ENCODE measurements at regions of chr1 and their contacts with region 1.

Region 1: DNA sequence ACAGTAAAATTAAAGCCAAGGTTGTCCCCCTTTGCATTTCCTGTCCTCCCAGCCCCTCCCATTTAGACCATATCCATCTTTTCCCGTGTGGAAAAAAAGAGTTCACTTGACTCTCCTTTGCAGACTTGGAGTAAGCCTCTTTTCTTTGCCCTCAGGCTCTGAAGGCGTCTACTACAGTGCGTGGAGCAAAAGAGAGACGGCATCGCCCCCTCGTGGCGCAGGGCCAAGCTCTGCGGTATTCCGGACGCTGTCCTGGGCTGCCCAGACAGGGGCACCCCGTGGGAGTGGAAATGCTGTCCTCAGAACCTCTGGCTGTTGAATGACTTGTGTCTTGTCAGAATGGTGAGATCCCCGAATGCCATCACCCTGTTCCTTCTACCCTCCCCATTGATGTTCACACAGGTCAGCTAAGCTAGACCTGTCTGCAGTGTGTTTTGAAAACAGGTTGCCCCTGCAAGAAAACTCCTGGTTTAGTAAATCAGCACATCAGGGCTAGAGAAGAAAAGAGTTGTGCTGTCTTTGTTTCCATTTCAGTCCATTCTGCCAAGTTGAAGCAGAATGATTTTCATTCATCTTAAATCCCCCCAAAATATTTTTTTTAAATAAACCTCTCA is 12.3 kb upstream of the GJA8 start:
- ATAC-seq: peak; percentile 84 to 100 (median 99)
- H3K4me3 ChIP-seq: no peak overlapping the region
- H3K27ac ChIP-seq: no peak overlapping the region
- H3K4me1 ChIP-seq: peaks cover 10 to 16% of the 10 kb centered on the region in 2 donors

Region 2: GRCh38 chr1:147292631-147293251 is 597.5 kb before region 1 on chr1:
- in situ Hi-C with region 1: loop called in 1 of 9 experiments (anchors 25 kb)
- ATAC-seq: peak in 3 of 8 experiments; percentile 58 to 92 (median 90)
- H3K4me3 ChIP-seq: no peak overlapping the region
- H3K27ac ChIP-seq: no peak overlapping the region
- H3K4me1 ChIP-seq: no peaks in the 10 kb centered on the region

Region 3: DNA sequence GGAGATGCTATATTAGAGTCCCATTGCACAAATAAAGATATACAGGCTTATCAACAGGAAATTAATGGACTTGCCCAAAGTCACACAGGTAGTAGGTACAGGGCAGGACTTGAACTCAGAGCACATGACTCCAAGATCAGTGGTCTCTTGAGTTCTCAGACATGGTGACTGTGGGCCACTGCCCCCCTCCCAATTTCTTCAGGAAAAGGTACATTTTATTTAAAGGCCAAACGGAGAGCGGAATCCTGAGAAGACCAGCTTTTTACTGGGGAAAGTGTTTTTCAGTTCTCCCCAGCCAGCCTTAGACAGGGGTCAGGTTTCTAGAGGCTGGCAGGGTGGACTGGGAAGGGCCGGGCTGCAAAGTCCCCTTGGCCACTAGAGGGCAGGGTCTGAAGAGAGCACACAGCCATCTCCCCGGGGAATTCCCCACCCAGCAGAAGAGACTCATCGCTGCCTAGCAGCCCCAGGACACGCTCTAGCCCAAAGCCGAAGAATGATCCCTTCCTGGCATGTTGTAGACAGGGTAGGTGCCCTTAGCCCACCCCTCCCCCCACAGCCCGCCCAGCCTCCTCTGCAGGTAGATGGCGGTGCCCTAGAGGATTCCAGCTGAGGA is 249.6 kb before region 1 on chr1:
- in situ Hi-C with region 1: loop called in 2 of 9 experiments (anchors 25 kb)
- ATAC-seq: peak; percentile 72 to 99 (median 87)
- H3K4me3 ChIP-seq: no peak overlapping the region
- H3K27ac ChIP-seq: no peak overlapping the region
- H3K4me1 ChIP-seq: no peaks in the 10 kb centered on the region

Region 4: DNA sequence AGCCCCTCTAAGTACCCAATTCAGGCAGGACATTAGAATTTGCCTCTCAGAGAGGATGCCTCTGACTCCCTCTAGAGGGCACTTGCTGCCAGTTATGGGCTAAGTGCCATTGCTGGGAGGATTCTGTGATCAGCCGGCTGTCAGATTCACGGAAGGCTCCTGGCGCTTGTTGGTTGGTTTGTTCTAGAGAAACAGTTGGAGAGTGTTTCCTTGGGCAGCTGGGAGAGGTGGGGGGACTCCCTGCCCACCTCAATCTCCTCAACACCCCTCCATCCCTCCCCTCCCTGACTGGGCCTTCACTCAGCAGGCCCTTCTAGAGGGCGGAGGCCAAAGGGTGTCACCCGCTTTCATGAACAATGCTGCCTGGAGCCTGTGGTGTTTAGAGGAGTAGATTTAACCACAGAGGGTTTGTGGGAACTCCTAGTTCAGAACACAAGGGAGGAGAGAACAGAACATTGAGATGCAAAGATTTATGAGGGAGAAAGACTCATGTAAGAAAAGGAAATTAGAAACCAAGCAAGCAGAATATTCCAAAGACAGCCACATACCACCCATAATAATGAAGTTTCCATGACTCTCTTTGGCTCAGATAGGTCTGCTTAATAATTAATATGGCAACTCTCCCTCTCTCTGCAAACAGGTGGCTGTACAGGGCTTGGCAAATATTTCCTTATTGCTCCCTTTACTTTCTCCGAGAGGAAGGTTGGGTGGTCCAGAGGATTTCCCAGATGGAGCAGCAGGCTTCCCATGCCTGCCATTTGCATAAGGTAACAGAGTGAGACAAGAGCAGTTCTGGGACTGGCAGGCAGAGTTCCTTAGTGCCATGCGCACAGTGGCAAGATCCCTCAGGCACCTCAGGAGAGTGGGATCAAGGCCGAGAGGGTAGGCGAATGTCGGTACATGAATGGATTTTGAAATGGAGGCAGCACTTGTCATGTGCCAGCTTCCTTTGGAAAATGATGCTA is 190.0 kb before region 1 on chr1:
- in situ Hi-C with region 1: loop called in 2 of 9 experiments (anchors 25 kb)
- ATAC-seq: peak; percentile 89 to 99 (median 93)
- H3K4me3 ChIP-seq: no peak overlapping the region
- H3K27ac ChIP-seq: peak overlapping the region in 1 of 2 donors; percentile 18
- H3K4me1 ChIP-seq: peaks cover 7 to 17% of the 10 kb centered on the region in 2 donors

Region 5: GRCh38 chr1:147748676-147749350 is 141.5 kb before region 1 on chr1:
- in situ Hi-C with region 1: loop called in 1 of 9 experiments (anchors 25 kb)
- ATAC-seq: peak in 1 of 8 experiments; percentile 21
- H3K4me3 ChIP-seq: no peak overlapping the region
- H3K27ac ChIP-seq: no peak overlapping the region
- H3K4me1 ChIP-seq: peaks cover 0 to 10% of the 10 kb centered on the region in 2 donors

Region 6: DNA sequence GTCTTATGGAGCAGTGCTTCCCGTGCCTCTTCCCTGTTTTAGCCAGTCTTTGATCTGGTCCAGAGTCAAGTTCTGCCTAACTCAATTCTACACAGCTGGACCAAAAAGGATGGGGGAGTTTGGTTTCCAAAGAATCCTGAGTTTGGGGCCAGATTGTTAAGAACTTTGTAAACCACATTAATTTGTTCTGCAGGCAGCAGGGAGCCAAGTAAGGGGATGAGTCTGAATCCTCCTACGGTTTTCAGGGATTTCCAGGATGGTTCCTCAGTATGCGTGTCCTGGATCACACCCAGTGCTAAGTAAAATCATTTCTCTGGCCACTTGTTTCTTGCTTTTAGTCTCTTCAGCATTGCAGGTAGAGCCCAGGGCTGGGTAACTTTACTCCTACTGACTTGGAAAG is 103.7 kb before region 1 on chr1:
- in situ Hi-C with region 1: no loop called
- ATAC-seq: peak in 1 of 8 experiments; percentile 21
- H3K4me3 ChIP-seq: no peak overlapping the region
- H3K27ac ChIP-seq: no peak overlapping the region
- H3K4me1 ChIP-seq: peaks cover 11 to 15% of the 10 kb centered on the region in 2 donors

Region 7: DNA sequence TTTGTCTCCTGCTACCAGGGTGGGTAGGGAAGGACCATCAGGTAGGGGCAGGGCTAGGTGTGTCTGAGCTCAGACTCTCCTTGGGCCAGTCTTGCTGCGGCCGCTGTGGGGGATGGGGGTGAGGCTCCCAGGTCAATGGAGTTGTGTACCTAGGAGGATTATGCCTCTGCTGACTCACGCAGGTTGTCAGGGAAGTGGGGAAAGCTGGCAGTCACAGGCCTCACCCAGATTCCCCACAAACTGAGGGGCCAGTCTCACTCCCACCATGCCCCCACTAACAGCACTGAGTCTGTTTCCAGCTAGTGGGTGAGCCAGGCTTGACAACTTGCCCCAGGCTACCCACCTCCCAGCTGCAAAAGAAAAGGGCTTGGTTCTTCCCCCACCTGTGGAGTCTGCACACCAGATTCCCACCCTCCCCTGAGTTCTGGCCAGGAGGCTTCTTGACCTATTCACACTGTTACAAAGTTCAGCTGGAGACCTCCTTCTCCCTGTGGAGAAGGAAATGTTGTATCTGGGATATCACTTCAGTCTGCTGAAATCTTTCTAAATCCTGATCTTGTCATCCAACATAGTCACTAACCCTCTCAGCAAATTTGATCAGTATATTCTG is 56.9 kb before region 1 on chr1:
- in situ Hi-C with region 1: no loop called
- ATAC-seq: no peak
- H3K4me3 ChIP-seq: no peak overlapping the region
- H3K27ac ChIP-seq: no peak overlapping the region
- H3K4me1 ChIP-seq: peaks cover 0 to 8% of the 10 kb centered on the region in 2 donors

Measured in motor neuron (in vitro differentiated cells).